Activated CD4-positive, alpha-beta T cell treated with anti-CD3 and anti-CD28 coated beads, Interleukin-2, amount 10 ng/mL, durations not matched to agents 7 days and 5 days (primary cell): ENCODE measurements at regions of chr2 and their contacts with region 1.

Region 1: GRCh38 chr2:25388491-25388890 is 46.8 kb upstream of the DNMT3A start:
- DNase-seq: peak; percentile 76
- H3K4me3 Mint-ChIP-seq: peak overlapping the region; percentile 55
- H3K27ac Mint-ChIP-seq: peak overlapping the region; percentile 92
- H3K4me1 Mint-ChIP-seq: peaks cover 43% of the 10 kb centered on the region
- H3K27me3 Mint-ChIP-seq: no peaks in the 10 kb centered on the region

Region 2: GRCh38 chr2:25376750-25377621 is 11.5 kb before region 1 on chr2:
- CTCF ChIA-PET with region 1: interaction called, 32 read pairs
- POLR2A ChIA-PET with region 1: no interaction called
- DNase-seq: peak; percentile 94
- H3K4me3 Mint-ChIP-seq: peak overlapping the region; percentile 64
- H3K27ac Mint-ChIP-seq: peak overlapping the region; percentile 98
- H3K4me1 Mint-ChIP-seq: peaks cover 42% of the 10 kb centered on the region
- H3K27me3 Mint-ChIP-seq: no peaks in the 10 kb centered on the region

Region 3: DNA sequence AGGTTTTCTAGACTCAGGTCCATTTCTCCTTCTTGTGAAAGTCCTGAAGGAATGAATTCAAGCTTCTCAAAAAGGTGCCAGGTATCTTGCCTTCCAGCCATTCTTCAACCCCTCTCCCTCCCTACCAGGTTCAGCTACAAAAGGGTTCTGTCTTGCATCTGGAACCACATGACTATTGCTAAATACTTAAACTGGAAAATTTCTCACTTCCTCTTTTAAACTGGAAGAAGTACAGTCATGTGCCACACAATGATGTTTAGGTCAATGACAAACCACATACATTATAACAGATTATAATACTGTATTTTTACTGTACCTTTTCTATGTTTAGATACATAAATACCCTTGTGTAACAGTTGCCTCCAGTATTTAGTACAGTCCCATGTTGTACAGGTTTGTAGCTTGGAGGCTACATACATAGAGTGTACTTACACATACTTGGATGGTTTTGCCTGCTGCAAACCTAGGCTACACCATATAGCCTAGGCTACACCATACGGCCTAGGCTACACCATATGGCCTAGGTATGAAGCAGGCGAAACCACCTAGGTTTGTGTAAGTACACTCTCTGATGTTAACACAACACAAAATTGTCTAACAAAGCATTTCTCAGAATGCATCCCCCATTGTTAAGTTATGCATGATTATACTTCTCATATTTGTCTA is 95.2 kb after region 1 on chr2:
- CTCF ChIA-PET with region 1: no interaction called
- POLR2A ChIA-PET with region 1: no interaction called
- DNase-seq: no peak
- H3K4me3 Mint-ChIP-seq: no peak overlapping the region
- H3K27ac Mint-ChIP-seq: no peak overlapping the region
- H3K4me1 Mint-ChIP-seq: peaks cover 5% of the 10 kb centered on the region
- H3K27me3 Mint-ChIP-seq: no peaks in the 10 kb centered on the region